ENCODE measurements at regions of chr18 and their contacts with region 1.

Region 1: DNA sequence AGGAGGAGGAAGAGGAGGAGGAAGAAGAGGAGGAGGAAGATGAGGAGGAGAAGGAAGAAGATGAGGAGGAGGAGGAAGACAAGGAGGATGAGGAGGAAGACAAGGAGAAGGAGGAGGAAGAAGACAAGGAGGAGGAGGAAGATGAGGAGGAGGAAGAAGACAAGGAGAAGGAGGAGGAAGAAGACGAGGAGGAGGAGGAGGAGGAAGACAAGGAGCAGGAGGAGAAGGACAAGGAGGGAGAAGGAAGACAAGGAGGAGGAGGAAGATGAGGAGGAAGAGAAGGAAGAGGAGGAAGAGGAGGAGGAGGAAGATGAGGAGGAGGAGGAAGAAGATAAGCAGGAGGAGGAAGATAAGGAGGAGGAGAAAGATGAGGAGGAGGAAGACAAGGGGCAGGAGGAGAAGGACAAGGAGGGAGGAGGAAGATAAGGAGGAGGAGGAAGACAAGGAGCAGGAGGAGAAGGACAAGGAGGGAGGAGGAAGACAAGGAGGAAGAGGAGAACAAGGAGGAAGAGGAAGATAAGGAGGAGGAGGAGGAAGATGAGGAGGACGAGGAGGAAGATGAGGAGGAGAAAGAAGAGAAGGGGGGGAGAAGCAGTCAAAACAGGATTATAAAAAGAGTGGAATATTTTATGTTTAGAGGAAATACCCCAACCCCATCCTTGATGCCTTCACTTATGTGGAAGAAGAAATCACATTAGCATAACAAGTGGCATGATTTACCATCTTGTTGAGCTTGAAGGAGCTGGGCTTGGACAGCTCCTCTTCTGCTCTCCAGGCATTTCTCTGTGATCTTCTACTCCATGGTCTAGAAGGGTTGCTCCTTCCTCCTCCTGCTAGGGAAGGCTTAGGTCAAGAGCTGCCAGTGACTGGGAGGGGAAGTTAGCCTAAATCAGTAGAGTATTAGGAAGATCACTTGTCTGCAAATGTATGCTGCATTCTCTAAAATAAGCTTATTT is 45.3 kb upstream of the KCTD1 start:
- DNase-seq: no peak
- ATAC-seq: no peak
- H3K4me3 ChIP-seq: no peak overlapping the region
- H3K27ac ChIP-seq: no peak overlapping the region
- H3K4me1 ChIP-seq: no peaks in the 10 kb centered on the region
- H3K27me3 ChIP-seq: no peaks in the 10 kb centered on the region; the same call in 1 of the 2 replicates
- CTCF ChIP-seq: no peak
- POLR2A ChIP-seq: no peak
- RAD21 ChIP-seq: no peak

Region 2: DNA sequence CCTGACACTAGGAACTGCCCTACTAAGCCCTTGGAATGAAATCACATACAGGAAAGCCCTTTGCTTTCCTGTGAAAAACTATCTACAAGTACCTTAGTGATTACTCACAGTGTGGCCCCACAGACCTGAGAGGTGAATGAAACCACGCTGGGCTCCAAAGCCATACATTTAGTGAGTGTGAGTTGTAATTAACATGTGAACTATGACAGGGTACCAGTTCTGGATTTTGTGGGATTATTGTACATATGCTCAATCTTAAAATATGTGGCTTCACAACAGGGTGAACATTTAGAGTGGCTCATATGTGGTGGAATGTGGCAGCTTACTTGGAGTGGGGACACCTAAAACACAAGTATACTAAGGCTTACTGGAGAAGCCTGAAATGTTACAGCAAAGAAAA is 57.6 kb before region 1 on chr18:
- CTCF ChIA-PET with region 1: no interaction called
- POLR2A ChIA-PET with region 1: no interaction called
- dilution Hi-C with region 1: no loop called
- in situ Hi-C with region 1: no loop called
- intact Hi-C with region 1: loop called (anchors 10 kb)
- DNase-seq: no peak
- ATAC-seq: peak; percentile 62
- H3K4me3 ChIP-seq: no peak overlapping the region
- H3K27ac ChIP-seq: no peak overlapping the region
- H3K4me1 ChIP-seq: no peaks in the 10 kb centered on the region
- H3K27me3 ChIP-seq: no peaks in the 10 kb centered on the region
- CTCF ChIP-seq: no peak
- POLR2A ChIP-seq: no peak
- RAD21 ChIP-seq: no peak

Region 3: DNA sequence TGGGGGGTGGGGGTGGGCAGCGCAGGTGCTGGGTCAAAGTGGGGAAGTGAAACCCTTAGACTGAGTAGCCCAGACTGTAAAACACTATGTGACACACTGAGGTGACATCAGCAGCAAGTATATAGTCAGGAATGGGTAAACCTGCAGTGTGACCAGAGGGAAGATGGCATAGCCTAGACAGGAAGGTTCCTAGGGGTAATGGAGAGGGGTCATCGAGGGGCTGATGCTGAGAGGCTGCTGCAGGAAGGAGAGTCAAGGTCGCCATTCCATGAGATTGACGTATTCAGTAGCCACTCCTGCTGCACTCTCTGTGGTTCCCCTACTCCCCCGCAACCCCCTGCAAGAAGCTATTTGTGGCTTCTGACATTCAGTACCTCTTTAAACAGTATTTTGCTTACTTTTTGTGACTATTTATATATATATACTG is 479.8 kb after region 1 on chr18:
- CTCF ChIA-PET with region 1: no interaction called
- POLR2A ChIA-PET with region 1: no interaction called
- dilution Hi-C with region 1: no loop called
- in situ Hi-C with region 1: no loop called
- intact Hi-C with region 1: no loop called
- DNase-seq: no peak
- ATAC-seq: no peak
- H3K4me3 ChIP-seq: no peak overlapping the region
- H3K27ac ChIP-seq: no peak overlapping the region
- H3K4me1 ChIP-seq: no peaks in the 10 kb centered on the region
- H3K27me3 ChIP-seq: no peaks in the 10 kb centered on the region
- CTCF ChIP-seq: no peak
- POLR2A ChIP-seq: no peak
- RAD21 ChIP-seq: no peak